CD14-positive monocyte (primary cell): ENCODE measurements at regions of chr13 and their contacts with region 1.

Region 1: GRCh38 chr13:99335603-99336002 is 28.4 kb upstream of the GPR183 start:
- DNase-seq: peak in 2 of 3 donors; percentile 29 to 39
- H3K4me3 ChIP-seq: no peak overlapping the region
- H3K4me3 Mint-ChIP-seq: no peak overlapping the region
- H3K27ac ChIP-seq: peak overlapping the region in 1 of 2 donors; percentile 36
- H3K27ac Mint-ChIP-seq: peak overlapping the region in 6 of 7 donors; percentile 64 to 85 (median 83)
- H3K4me1 ChIP-seq: peaks cover 19 to 40% of the 10 kb centered on the region in 2 donors
- H3K4me1 Mint-ChIP-seq: peaks cover 41% of the 10 kb centered on the region
- H3K27me3 ChIP-seq: no peaks in the 10 kb centered on the region
- H3K27me3 Mint-ChIP-seq: peaks cover 0 to 1% (median 0%) of the 10 kb centered on the region in 3 donors
- CTCF ChIP-seq: no peak

Region 2: GRCh38 chr13:99380921-99381645 is 45.5 kb after region 1 on chr13:
- intact Hi-C with region 1: loop called in 1 of 2 experiments (anchors 5 kb)
- DNase-seq: no peak
- H3K4me3 ChIP-seq: no peak overlapping the region
- H3K4me3 Mint-ChIP-seq: no peak overlapping the region
- H3K27ac ChIP-seq: no peak overlapping the region
- H3K27ac Mint-ChIP-seq: peak overlapping the region in 2 of 7 donors; percentile 46 to 73
- H3K4me1 ChIP-seq: peaks cover 31 to 39% of the 10 kb centered on the region in 2 donors
- H3K4me1 Mint-ChIP-seq: peaks cover 54% of the 10 kb centered on the region
- H3K27me3 ChIP-seq: no peaks in the 10 kb centered on the region
- H3K27me3 Mint-ChIP-seq: peaks cover 0 to 1% (median 0%) of the 10 kb centered on the region in 3 donors
- CTCF ChIP-seq: no peak

Region 3: GRCh38 chr13:99464441-99464949 is 128.9 kb after region 1 on chr13:
- intact Hi-C with region 1: no loop called
- DNase-seq: peak in 1 of 3 donors; percentile 36
- H3K4me3 ChIP-seq: peak overlapping the region; percentile 6 to 65 (median 26)
- H3K4me3 Mint-ChIP-seq: peak overlapping the region; percentile 53 to 85
- H3K27ac ChIP-seq: peak overlapping the region; percentile 58 to 83
- H3K27ac Mint-ChIP-seq: peak overlapping the region; percentile 31 to 89 (median 83)
- H3K4me1 ChIP-seq: peaks cover 43 to 47% of the 10 kb centered on the region in 2 donors
- H3K4me1 Mint-ChIP-seq: peaks cover 41% of the 10 kb centered on the region
- H3K27me3 ChIP-seq: no peaks in the 10 kb centered on the region
- H3K27me3 Mint-ChIP-seq: peaks cover 0 to 3% (median 0%) of the 10 kb centered on the region in 3 donors
- CTCF ChIP-seq: no peak